PC-9 (cell line): ENCODE measurements at regions of chr17 and their contacts with region 1.

Region 1: DNA sequence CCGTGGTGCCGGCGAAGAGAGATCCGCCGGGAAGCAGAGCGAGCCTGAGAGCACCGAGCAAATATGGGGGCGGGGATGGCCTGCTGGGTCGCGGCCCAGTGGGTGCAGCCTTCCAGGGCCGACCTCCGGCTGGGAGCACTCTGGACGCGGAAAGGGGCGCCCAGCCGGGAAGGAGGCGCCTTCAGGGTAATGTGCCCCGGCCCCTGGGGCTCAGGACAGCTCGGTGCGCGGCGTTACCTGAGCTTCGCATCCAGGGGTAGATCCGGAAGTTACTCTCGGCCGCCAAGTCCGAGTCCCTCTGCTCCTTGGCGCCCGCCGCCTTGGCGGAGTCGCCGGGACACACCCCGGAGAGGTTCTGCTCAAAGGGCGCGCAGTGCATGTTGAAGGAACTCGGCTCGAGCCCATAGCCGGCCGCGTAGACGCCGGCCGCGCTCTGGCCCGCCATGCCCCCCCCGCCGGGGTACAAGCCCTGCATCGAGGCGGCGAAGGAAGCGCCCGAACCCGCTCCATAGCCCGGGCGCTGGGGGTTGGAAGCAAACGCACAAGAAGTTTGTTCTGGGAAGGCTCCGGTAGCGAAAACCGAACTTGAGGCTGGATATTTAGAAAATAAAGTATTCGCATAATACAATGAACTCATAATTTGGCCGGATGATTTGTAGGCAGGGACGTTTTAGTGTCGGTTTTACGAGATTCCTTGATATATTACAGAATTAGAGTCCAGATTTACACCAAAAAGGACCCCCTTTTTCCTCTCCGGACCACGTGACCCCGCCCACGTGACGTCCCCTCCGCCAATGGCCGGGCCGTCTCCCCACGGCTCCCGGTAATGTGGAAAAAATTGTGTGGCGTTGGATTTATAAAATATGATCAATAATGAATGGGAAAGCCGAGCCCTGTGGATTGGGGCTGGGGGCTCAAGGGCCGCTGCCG is at the start of gene HOXB7:
- DNase-seq: peak; percentile 52 to 64
- H3K4me3 ChIP-seq: peak within 1 kb of the TSS; percentile 80
- H3K27ac ChIP-seq: peak within 1 kb of the TSS; percentile 63
- H3K4me1 ChIP-seq: peaks cover 23% of the 10 kb centered on the region
- H3K27me3 ChIP-seq: no peaks in the 10 kb centered on the region
- CTCF ChIP-seq: no peak
- total RNA-seq, gene HOXB7: 28.2 and 34.0 TPM in 2 replicates

Region 2: DNA sequence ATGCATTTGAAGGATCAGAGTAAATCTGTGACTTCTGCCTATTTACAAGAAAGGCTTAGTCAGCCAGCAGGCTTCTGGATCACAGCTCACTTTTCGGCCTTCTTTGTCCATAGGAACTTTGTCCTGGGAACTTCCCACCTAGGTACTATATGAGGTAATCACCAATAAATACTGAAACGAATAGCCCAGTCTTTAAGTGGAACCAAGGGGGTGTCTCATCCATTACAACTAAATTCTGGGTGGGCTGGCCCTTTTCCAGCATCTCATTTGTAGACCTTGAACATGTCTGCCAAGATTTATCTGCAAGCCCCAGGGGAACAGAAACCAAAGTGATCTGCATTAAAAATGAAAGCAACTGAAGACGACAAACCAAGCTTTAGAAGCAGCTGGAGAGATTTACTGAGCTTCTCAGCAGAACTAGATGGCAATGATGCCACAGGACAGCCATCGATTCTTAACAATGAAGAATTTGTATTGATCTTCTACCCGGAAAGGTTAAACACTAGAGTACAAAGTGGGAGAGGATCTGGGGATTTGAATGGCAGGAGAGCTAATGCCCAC is 447.5 kb before region 1 on chr17:
- CTCF ChIA-PET with region 1: no interaction called
- POLR2A ChIA-PET with region 1: interaction called, 16 read pairs
- intact Hi-C with region 1: no loop called
- DNase-seq: no peak
- H3K4me3 ChIP-seq: no peak overlapping the region
- H3K27ac ChIP-seq: no peak overlapping the region
- H3K4me1 ChIP-seq: no peaks in the 10 kb centered on the region
- H3K27me3 ChIP-seq: no peaks in the 10 kb centered on the region
- CTCF ChIP-seq: no peak

Region 3: GRCh38 chr17:48378708-48379392 is 231.7 kb before region 1 on chr17:
- CTCF ChIA-PET with region 1: interaction called, 16 read pairs
- POLR2A ChIA-PET with region 1: no interaction called
- intact Hi-C with region 1: no loop called
- DNase-seq: no peak
- H3K4me3 ChIP-seq: no peak overlapping the region
- H3K27ac ChIP-seq: no peak overlapping the region
- H3K4me1 ChIP-seq: no peaks in the 10 kb centered on the region
- H3K27me3 ChIP-seq: no peaks in the 10 kb centered on the region
- CTCF ChIP-seq: no peak

Region 4: GRCh38 chr17:48625495-48626244 is 15.1 kb after region 1 on chr17:
- CTCF ChIA-PET with region 1: interaction called, 13 read pairs
- POLR2A ChIA-PET with region 1: no interaction called
- intact Hi-C with region 1: no loop called
- DNase-seq: peak; percentile 62 to 68
- H3K4me3 ChIP-seq: peak overlapping the region; percentile 70
- H3K27ac ChIP-seq: peak overlapping the region; percentile 61
- H3K4me1 ChIP-seq: peaks cover 3% of the 10 kb centered on the region; the same call in 1 of the 2 replicates
- H3K27me3 ChIP-seq: peaks cover 16% of the 10 kb centered on the region; the same call in 1 of the 2 replicates
- CTCF ChIP-seq: no peak; the same call in 1 of the 2 replicates